ENCODE measurements at regions of chrX and their contacts with region 1.

Region 1: GRCh38 chrX:151505796-151506195 is 57.7 kb upstream of the PASD1 start:
- DNase-seq: peak in 2 of 5 donors; percentile 4 to 28
- ATAC-seq: peak in 1 of 4 donors; percentile 34
- H3K4me3 ChIP-seq: no peak overlapping the region
- H3K27ac ChIP-seq: no peak overlapping the region
- H3K4me1 ChIP-seq: no peaks in the 10 kb centered on the region
- H3K27me3 ChIP-seq: peaks cover 0 to 13% (median 0%) of the 10 kb centered on the region in 9 donors
- CTCF ChIP-seq: peak in 8 of 12 donors; percentile 15 to 44 (median 30)
- POLR2A ChIP-seq: no peak

Region 2: GRCh38 chrX:151543706-151544105 is 37.9 kb after region 1 on chrX:
- intact Hi-C with region 1: no loop called
- DNase-seq: no peak
- ATAC-seq: no peak
- H3K4me3 ChIP-seq: no peak overlapping the region
- H3K27ac ChIP-seq: no peak overlapping the region
- H3K4me1 ChIP-seq: no peaks in the 10 kb centered on the region
- H3K27me3 ChIP-seq: peaks cover 0 to 10% (median 0%) of the 10 kb centered on the region in 9 donors
- CTCF ChIP-seq: no peak
- POLR2A ChIP-seq: no peak

Region 3: DNA sequence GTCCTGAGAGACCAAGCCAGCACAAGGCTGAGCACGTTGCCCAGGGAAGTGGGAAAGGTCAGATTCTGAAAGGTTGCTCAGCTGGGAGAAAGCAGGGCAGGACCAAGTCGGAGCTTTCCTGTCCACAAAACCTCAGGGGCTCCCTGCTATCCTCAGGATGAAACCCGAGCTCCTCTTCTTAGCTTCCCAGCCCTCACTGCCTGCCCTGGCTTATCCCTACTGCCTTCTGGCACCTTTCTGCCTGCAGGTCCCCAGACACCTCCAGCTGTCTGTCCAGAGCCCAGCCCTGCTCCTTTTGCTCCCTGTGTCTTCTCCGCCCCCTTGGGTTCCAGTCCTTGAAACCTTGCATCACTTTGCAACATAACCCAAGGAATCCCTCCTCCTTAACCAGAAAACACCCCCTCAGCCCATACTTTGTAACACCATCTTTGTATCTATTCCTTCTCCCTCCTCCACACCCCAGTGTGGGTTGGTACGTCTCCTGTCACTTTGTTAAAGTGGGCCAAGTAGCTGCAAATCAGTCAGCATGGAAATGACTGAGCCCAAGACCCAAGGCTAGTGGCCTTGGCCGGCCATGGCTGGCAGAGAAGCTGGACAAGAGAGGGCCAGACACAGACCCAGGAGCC is 169.4 kb after region 1 on chrX:
- intact Hi-C with region 1: loop called in 3 of 10 experiments (anchors 10 kb)
- DNase-seq: no peak
- ATAC-seq: no peak
- H3K4me3 ChIP-seq: no peak overlapping the region
- H3K27ac ChIP-seq: no peak overlapping the region
- H3K4me1 ChIP-seq: no peaks in the 10 kb centered on the region
- H3K27me3 ChIP-seq: peaks cover 0 to 9% (median 0%) of the 10 kb centered on the region in 9 donors
- CTCF ChIP-seq: no peak
- POLR2A ChIP-seq: no peak

Region 4: GRCh38 chrX:151680805-151681204 is 175.0 kb after region 1 on chrX:
- intact Hi-C with region 1: loop called in 3 of 10 experiments (anchors 10 kb)
- DNase-seq: peak in 1 of 5 donors; percentile 25
- ATAC-seq: peak; percentile 37 to 69 (median 58)
- H3K4me3 ChIP-seq: no peak overlapping the region
- H3K27ac ChIP-seq: no peak overlapping the region
- H3K4me1 ChIP-seq: no peaks in the 10 kb centered on the region
- H3K27me3 ChIP-seq: peaks cover 0 to 21% (median 0%) of the 10 kb centered on the region in 9 donors
- CTCF ChIP-seq: peak; percentile 39 to 63 (median 52)
- POLR2A ChIP-seq: no peak

Region 5: GRCh38 chrX:151722241-151722846 is 216.5 kb after region 1 on chrX:
- intact Hi-C with region 1: loop called in 1 of 10 experiments (anchors 5 kb)
- DNase-seq: peak in 3 of 5 donors; percentile 21 to 68 (median 46)
- ATAC-seq: peak in 3 of 4 donors; percentile 54 to 77 (median 55)
- H3K4me3 ChIP-seq: no peak overlapping the region
- H3K27ac ChIP-seq: peak overlapping the region in 6 of 12 donors; percentile 25 to 69 (median 52)
- H3K4me1 ChIP-seq: peaks cover 0 to 26% (median 2%) of the 10 kb centered on the region in 12 donors
- H3K27me3 ChIP-seq: peaks cover 0 to 2% (median 0%) of the 10 kb centered on the region in 9 donors
- CTCF ChIP-seq: peak in 10 of 12 donors; percentile 23 to 47 (median 36)
- POLR2A ChIP-seq: no peak

Region 6: DNA sequence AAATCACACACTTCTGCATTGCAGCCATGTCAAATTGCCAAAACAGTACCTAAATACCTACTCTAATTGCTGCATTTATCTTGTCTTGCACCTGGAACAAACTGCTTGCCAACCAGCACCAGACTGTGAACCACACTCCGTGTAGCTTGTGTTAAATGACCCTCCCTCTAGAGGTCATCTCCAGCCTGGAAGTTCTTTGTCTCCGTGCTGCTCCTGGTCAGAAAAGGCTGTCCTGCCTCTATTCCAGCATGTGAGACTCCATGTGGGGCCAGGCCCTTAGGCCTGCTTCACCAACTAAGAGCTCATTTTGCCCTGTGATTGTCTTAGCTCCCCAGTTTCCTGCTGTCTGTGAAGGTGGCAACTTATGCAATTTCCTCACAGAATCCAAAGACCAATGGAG is 257.0 kb after region 1 on chrX:
- intact Hi-C with region 1: no loop called
- DNase-seq: no peak
- ATAC-seq: no peak
- H3K4me3 ChIP-seq: no peak overlapping the region
- H3K27ac ChIP-seq: no peak overlapping the region
- H3K4me1 ChIP-seq: no peaks in the 10 kb centered on the region
- H3K27me3 ChIP-seq: no peaks in the 10 kb centered on the region
- CTCF ChIP-seq: no peak
- POLR2A ChIP-seq: no peak

Region 7: DNA sequence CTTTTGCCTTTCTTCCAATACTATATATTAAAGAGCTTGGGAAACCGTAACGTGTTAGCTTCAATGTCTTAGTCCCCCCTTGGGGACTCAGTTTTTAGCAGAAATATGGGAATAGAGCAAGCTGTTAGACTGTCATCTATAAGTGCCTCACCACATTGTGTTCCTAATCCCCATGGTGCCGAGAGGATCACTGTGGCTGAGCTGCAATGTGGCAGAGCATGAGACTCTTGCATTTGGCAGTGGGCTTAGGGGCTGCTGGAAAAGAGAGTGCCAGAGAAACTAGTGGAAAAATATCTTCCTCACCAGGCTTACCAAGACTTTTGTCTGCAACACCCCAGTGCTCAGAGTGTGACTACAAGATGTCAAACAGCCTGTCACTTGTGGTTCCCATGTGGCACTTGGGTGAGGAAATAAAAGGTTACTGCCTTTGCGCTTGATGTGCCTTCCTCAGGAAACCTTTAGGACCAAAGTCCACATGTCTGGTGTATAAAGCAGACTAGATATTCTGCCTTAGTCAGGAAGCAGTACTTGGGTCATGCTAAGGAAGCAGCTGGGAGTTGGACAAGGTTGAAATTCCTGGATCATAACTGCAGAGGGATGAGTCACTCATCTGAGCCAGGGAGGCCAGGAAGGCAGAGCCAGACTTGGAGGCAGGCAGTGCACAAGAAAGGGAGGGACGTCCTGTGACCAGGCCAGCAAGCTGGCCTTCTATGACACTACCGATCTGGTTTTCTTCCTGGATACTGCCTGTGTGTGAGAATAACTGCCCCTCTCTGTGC is 397.2 kb after region 1 on chrX:
- intact Hi-C with region 1: no loop called
- DNase-seq: peak; percentile 24 to 76 (median 52)
- ATAC-seq: peak in 3 of 4 donors; percentile 97 to 99 (median 98)
- H3K4me3 ChIP-seq: no peak overlapping the region
- H3K27ac ChIP-seq: no peak overlapping the region
- H3K4me1 ChIP-seq: peaks cover 0 to 7% (median 0%) of the 10 kb centered on the region in 12 donors
- H3K27me3 ChIP-seq: peaks cover 0 to 5% (median 0%) of the 10 kb centered on the region in 9 donors
- CTCF ChIP-seq: no peak
- POLR2A ChIP-seq: no peak